Activated CD4-positive, alpha-beta T cell treated with anti-CD3 and anti-CD28 coated beads for 36 hours (primary cell): ENCODE measurements at regions of chr6 and their contacts with region 1.

Region 1: GRCh38 chr6:32700391-32701040 is 34.1 kb upstream of the HLA-DQB1 start:
- DNase-seq: peak; percentile 28
- ATAC-seq: peak; percentile 42
- H3K4me3 Mint-ChIP-seq: no peak overlapping the region
- H3K27ac Mint-ChIP-seq: no peak overlapping the region
- H3K4me1 Mint-ChIP-seq: no peaks in the 10 kb centered on the region
- H3K27me3 Mint-ChIP-seq: peaks cover 29% of the 10 kb centered on the region

Region 2: DNA sequence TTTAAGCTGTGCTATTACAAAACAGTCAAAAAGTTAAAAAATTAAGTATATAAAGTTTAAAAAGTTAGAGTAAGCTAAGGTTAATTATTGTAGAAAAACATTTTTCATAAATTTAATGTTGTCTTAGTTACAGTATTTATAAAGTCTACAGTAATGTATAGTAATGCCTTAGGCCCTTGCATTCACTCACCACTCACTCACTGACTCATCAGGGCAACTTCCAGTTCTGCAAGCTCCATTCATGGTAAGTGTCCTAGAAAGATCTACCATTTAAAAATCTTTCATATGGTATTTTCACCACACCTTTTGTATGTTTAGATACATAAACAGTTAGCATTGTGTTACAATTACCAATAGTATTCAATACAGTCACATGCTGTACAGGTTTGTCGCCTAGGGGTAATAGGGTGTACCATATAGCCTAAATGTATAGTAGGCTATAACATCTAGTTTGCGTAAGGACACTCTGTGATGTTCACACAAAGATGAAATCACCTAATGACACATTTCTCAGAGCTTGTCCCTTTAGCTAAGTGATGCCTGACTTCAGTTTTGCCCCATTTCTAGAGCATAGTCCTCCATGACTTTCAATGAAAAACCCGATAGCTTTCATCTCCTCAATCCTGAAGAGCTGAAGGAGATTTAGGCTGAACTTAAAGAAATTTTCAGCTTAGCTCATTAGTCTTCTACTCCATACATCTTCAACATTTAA is 275.8 kb before region 1 on chr6:
- CTCF ChIA-PET with region 1: interaction called, 15 read pairs
- POLR2A ChIA-PET with region 1: no interaction called
- intact Hi-C with region 1: no loop called
- DNase-seq: no peak
- ATAC-seq: no peak
- H3K4me3 Mint-ChIP-seq: no peak overlapping the region
- H3K27ac Mint-ChIP-seq: no peak overlapping the region
- H3K4me1 Mint-ChIP-seq: no peaks in the 10 kb centered on the region
- H3K27me3 Mint-ChIP-seq: peaks cover 20% of the 10 kb centered on the region

Region 3: DNA sequence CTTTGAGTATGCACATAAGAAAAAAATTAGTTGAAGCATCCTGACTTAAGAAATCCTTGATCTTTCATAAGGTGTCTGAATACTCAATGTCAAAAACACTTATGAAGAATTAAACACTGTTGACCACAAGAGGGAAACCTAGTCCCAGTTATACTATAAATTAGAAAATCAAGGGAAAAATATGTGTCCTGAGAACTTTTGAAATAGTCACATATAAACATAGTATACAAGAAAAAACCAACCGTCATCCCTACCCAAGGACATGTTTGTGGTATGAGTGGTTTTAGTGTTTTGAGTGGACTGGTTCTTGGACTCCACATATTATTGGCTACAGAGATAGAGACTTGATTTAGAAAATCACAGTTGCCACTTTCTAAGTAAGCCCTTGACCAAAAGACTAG is 268.5 kb before region 1 on chr6:
- CTCF ChIA-PET with region 1: interaction called, 9 read pairs
- POLR2A ChIA-PET with region 1: no interaction called
- intact Hi-C with region 1: loop called in 1 of 2 experiments (anchors 2 kb)
- DNase-seq: no peak
- ATAC-seq: no peak
- H3K4me3 Mint-ChIP-seq: no peak overlapping the region
- H3K27ac Mint-ChIP-seq: no peak overlapping the region
- H3K4me1 Mint-ChIP-seq: no peaks in the 10 kb centered on the region
- H3K27me3 Mint-ChIP-seq: peaks cover 12% of the 10 kb centered on the region

Region 4: GRCh38 chr6:32716399-32716798 is 15.9 kb after region 1 on chr6:
- CTCF ChIA-PET with region 1: interaction called, 17 read pairs
- POLR2A ChIA-PET with region 1: no interaction called
- intact Hi-C with region 1: no loop called
- DNase-seq: no peak
- ATAC-seq: no peak
- H3K4me3 Mint-ChIP-seq: no peak overlapping the region
- H3K27ac Mint-ChIP-seq: no peak overlapping the region
- H3K4me1 Mint-ChIP-seq: no peaks in the 10 kb centered on the region
- H3K27me3 Mint-ChIP-seq: peaks cover 17% of the 10 kb centered on the region

Region 5: DNA sequence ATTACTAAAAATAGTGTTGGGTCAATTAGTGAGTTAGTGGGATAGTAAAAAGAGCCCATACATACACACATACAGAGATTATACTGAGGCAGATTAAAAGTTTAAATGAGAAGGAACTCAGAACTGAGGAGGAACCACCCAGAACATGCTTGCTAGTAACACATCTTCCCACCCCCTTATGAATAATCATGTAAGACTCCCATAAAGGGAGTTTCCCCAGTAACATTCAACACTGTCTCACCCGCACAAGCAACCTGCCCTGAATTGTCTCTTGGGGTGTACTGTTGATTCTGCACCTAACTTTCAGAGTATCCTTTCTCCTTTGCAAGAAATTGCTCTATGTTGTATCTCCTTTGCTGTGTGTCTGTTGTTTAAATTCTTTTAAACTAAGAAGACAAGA is 73.9 kb after region 1 on chr6:
- CTCF ChIA-PET with region 1: no interaction called
- POLR2A ChIA-PET with region 1: no interaction called
- intact Hi-C with region 1: no loop called
- DNase-seq: no peak
- ATAC-seq: peak; percentile 51
- H3K4me3 Mint-ChIP-seq: no peak overlapping the region
- H3K27ac Mint-ChIP-seq: no peak overlapping the region
- H3K4me1 Mint-ChIP-seq: no peaks in the 10 kb centered on the region
- H3K27me3 Mint-ChIP-seq: peaks cover 25% of the 10 kb centered on the region